A549 (cell line): ENCODE measurements at regions of chr10 and their contacts with region 1.

Region 1: DNA sequence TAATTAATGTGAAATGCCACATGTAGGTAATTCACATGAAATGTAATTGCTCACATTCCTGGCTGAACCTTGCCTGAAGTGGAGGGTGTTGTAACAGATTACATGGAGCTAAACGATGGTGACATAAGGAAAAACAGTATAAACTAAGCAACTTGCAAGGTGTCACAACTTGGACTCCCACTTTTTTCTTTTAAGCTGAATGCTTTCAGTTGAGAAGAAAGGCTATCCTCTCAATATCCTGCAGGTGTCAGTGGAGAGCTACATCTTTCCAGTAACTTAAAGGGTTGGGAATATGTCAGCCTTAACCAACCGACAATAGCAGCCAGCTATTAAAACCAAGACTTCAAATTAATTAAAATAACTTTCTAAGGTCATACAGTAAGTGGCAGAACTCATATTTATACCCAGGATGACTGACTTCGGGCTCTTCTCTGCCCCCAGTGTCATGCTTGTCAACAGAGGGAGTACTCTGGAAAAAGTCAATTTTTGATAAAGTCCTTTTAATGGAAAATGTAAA is 33.7 kb downstream of the NRBF2 start:
- DNase-seq: peak; percentile 31 to 84
- ATAC-seq: peak; percentile 87 to 91
- H3K4me3 ChIP-seq: no peak overlapping the region
- H3K27ac ChIP-seq: no peak overlapping the region
- H3K4me1 ChIP-seq: no peaks in the 10 kb centered on the region
- CTCF ChIP-seq: peak; percentile 82
- EP300 ChIP-seq: no peak
- POLR2A ChIP-seq: no peak
- RAD21 ChIP-seq: peak; percentile 79 to 82

Region 2: DNA sequence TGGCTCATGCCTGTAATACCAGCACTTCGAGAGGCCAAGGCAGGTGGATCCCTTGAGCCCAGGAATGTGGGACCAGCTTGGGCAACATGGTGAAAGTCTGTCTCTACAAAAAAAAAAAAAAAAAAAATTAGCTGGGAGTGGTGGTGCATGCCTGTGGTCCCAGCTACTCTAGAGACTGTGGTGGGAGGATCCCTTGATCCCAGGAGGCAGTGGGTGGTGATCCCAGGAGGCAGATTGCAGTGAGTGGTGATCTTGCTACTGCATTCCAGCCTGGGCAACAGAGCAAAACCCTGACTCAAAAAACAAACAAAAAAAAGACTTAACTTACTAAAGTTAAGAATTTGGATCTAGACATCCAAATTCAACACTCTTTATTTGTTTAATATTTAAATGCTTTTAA is 372.5 kb before region 1 on chr10:
- CTCF ChIA-PET with region 1: no interaction called
- POLR2A ChIA-PET with region 1: no interaction called
- DNase-seq: no peak
- ATAC-seq: no peak
- H3K4me3 ChIP-seq: no peak overlapping the region
- H3K27ac ChIP-seq: no peak overlapping the region
- H3K4me1 ChIP-seq: no peaks in the 10 kb centered on the region
- CTCF ChIP-seq: no peak
- EP300 ChIP-seq: no peak
- POLR2A ChIP-seq: no peak
- RAD21 ChIP-seq: no peak

Region 3: DNA sequence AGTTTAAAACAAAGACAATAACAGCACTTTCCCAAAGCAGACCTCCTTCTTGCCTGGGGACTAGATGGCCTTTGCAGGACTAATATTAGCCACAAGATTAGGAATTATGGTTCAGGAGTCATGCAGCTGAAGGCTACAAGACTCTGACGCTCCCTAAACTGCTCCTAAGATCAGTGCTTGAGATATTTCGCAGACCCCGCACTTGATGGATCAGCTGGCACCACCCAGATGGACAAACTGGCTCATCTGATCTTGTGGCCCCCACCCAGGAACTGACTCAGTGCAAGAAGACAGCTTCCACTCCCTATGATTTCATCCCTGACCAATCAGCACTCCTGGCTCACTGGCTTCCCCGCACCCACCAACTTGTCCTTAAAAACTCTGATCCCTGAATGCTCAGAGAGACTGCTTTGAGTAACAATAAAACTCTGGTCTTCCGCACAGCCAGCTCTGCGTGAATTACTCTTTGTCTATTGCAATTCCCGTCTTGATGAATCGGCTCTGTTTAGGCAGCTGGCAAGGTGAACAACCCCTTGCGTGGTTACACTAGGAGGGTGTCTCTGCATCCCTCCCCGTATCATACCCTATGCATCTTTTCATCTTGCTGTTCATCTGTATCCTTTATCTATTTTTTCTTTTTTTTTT is 60.6 kb before region 1 on chr10:
- CTCF ChIA-PET with region 1: no interaction called
- POLR2A ChIA-PET with region 1: no interaction called
- DNase-seq: no peak
- ATAC-seq: no peak
- H3K4me3 ChIP-seq: no peak overlapping the region
- H3K27ac ChIP-seq: no peak overlapping the region
- H3K4me1 ChIP-seq: no peaks in the 10 kb centered on the region
- CTCF ChIP-seq: no peak
- EP300 ChIP-seq: no peak
- POLR2A ChIP-seq: no peak
- RAD21 ChIP-seq: no peak

Region 4: GRCh38 chr10:63192826-63193225 is 26.0 kb after region 1 on chr10:
- CTCF ChIA-PET with region 1: interaction called, 10 read pairs
- POLR2A ChIA-PET with region 1: no interaction called
- DNase-seq: no peak
- ATAC-seq: no peak
- H3K4me3 ChIP-seq: no peak overlapping the region
- H3K27ac ChIP-seq: no peak overlapping the region
- H3K4me1 ChIP-seq: no peaks in the 10 kb centered on the region
- CTCF ChIP-seq: no peak
- EP300 ChIP-seq: no peak
- POLR2A ChIP-seq: no peak
- RAD21 ChIP-seq: no peak

Region 5: DNA sequence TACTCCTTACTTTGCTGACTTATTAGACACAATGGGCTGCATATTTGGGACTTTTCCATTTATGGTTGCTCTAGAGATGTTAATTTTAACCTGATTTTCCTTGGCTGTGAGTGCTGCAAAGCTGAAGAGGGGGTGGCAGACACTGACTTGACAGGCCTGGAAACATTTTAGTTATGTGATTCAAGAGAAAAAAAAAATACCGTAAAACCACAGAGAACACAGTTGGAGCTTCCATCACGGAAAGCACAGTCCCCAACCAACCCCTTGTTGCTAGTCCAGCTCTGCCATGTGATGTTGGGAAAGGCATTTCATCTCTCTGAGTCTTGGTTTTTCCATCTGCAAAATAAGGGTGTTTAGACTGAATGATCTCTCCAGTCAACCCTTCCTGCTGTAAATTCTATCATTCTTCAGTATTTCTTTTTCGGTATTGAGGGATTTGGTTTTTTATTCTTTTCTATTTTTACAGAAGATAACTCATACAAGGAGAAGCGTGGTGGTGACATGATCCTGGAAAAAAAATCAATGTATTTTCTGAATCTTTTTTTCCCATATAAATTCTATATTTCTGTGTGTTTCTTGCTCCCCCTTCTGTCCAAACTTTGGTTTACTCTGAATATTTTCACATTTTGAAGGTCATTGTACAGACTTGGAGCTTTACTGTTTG is 600.5 kb after region 1 on chr10:
- CTCF ChIA-PET with region 1: interaction called, 20 read pairs
- POLR2A ChIA-PET with region 1: no interaction called
- DNase-seq: peak in 1 of 2 experiments; percentile 18
- ATAC-seq: 0 out of 6 replicates have a peak, but pooled peaks of 1 of the 2 experiments have one; percentile 44
- H3K4me3 ChIP-seq: no peak overlapping the region
- H3K27ac ChIP-seq: no peak overlapping the region
- H3K4me1 ChIP-seq: no peaks in the 10 kb centered on the region
- CTCF ChIP-seq: peak; percentile 76
- EP300 ChIP-seq: no peak
- POLR2A ChIP-seq: no peak
- RAD21 ChIP-seq: peak; percentile 73 to 75